ENCODE measurements at regions of chr19 and their contacts with region 1.

Region 1: GRCh38 chr19:16382775-16383543 is 58.3 kb downstream of the KLF2 start:
- DNase-seq: peak; percentile 75 to 82 (median 78)
- ATAC-seq: peak; percentile 94
- H3K4me3 ChIP-seq: no peak overlapping the region
- H3K27ac ChIP-seq: no peak overlapping the region
- H3K4me1 ChIP-seq: peaks cover 0 to 11% of the 10 kb centered on the region in 2 experiments; a peak in 1 of 5 replicates
- H3K27me3 ChIP-seq: no peaks in the 10 kb centered on the region
- CTCF ChIP-seq: peak; percentile 78 to 85 (median 79)
- EP300 ChIP-seq: no peak
- POLR2A ChIP-seq: no peak
- RAD21 ChIP-seq: peak; percentile 91 to 97

Region 2: DNA sequence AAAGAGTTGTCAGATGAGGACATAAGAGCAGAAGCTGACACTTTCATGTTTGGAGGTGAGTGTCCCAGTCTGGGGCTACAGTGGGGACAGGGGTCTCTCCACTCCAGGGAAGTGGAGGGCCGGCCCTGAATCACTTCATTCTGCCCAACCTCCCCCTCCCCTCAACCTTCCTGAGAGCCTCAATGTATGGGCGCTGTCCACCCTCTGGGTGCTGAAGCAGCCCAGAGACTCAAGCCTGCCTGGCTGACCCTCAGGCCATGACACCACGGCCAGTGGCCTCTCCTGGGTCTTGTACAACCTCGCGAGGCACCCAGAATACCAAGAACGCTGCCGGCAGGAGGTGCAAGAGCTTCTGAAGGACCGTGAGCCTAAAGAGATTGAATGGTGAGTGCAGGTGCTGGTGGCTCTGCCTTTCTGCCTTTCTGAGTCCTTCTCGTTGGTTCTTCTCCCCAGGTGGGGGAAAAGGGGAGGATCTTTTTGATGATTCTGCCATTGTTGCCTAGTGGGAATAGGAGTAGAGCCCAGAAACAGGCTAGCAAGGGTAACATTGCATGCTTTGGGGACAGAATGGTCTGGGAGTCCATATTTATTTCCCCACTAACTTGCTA is 759.1 kb before region 1 on chr19:
- CTCF ChIA-PET with region 1: no interaction called
- POLR2A ChIA-PET with region 1: no interaction called
- in situ Hi-C with region 1: loop called (anchors 25 kb)
- intact Hi-C with region 1: no loop called
- DNase-seq: peak; percentile 31 to 59 (median 48)
- ATAC-seq: peak; percentile 78
- H3K4me3 ChIP-seq: no peak overlapping the region
- H3K27ac ChIP-seq: no peak overlapping the region
- H3K4me1 ChIP-seq: no peaks in the 10 kb centered on the region
- H3K27me3 ChIP-seq: no peaks in the 10 kb centered on the region; a peak in 1 of 5 replicates
- CTCF ChIP-seq: no peak
- EP300 ChIP-seq: no peak
- POLR2A ChIP-seq: no peak
- RAD21 ChIP-seq: no peak

Region 3: DNA sequence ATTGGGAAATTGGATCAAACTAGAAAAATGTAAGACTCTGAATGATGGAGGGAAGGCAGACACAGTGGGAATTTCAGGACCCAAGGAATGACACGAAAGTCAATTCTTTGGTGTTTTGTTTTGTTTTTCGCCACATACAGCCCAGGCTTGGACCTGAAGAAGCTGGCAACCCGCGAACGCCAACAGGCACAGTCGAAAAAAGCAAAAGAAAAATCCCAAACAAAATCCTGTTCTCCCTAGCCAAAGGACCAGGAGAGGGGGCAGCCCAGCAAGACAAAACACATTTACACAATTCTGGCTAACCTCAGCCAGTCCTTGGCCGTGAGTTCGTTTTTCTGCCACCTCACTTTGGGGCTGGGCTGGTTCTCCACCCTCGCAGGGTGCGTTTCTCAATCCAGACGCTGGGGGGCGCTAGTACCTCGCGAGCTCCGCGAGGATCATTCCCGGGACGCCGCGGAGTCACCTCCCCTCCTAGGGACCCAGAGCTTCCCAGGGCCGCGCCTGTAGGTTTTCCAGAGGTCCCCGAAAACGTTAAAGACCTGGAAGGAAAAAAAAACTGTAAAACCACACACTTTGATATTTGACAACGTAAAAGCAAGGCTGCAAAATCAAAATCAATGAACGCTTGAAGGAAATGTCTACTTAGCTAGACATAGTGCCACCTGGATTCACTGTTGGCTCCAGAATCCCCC is 341.5 kb before region 1 on chr19:
- CTCF ChIA-PET with region 1: no interaction called
- POLR2A ChIA-PET with region 1: no interaction called
- in situ Hi-C with region 1: loop called (anchors 10 kb)
- intact Hi-C with region 1: no loop called
- DNase-seq: peak; percentile 77 to 94 (median 90)
- ATAC-seq: peak; percentile 93
- H3K4me3 ChIP-seq: no peak overlapping the region
- H3K27ac ChIP-seq: no peak overlapping the region
- H3K4me1 ChIP-seq: peaks cover 0 to 9% of the 10 kb centered on the region in 2 experiments; a peak in 3 of 5 replicates
- H3K27me3 ChIP-seq: peaks cover 1 to 29% of the 10 kb centered on the region in 2 experiments; a peak in 3 of 5 replicates
- CTCF ChIP-seq: peak; percentile 90 to 95 (median 93)
- EP300 ChIP-seq: no peak
- POLR2A ChIP-seq: no peak
- RAD21 ChIP-seq: peak; percentile 88 to 94

Region 4: DNA sequence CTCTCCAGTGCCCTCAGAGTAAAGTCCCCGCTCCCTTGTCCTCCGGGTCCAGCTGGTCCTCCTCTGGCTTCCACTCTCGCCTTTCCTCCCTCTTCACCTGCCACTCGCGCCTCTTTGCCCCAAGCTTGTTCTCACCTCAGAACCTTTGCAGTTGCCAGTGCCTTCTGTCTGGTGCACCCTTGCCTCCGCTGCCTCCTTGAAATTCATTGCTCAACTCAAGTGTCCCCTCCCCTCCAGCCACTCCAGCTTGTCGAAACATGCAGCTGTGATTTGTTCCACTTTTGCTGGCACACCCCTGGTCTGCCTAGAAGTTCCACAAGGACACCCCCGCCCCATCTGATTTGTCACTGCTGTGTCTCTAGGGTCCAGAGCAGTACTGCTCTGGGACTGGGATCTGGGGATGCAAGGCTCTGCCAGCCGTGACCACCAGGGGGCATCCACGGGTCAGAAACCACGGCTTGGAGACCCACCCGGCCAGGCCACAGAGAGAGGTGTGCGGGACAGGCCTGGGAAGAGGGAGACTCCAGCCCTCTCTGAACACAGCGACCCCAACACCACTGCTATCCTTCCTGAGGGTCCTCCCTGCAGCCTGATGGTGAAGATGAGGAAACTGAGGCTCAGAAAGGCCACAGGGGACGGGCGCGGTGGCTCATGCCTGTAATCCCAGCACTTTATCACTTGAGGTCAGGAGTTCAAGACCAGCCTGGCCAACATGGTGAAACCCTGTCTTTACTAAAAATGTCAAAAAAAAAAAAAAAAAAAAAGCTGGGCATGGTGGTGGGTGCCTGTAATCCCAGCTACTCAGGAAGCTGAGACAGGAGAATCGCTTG is 135.4 kb before region 1 on chr19:
- CTCF ChIA-PET with region 1: interaction called, 60 read pairs
- POLR2A ChIA-PET with region 1: no interaction called
- in situ Hi-C with region 1: loop called (anchors 5 kb)
- intact Hi-C with region 1: loop called (anchors 1 kb)
- DNase-seq: peak; percentile 86 to 90 (median 89)
- ATAC-seq: peak; percentile 100
- H3K4me3 ChIP-seq: no peak overlapping the region
- H3K27ac ChIP-seq: no peak overlapping the region
- H3K4me1 ChIP-seq: peaks cover 0 to 9% of the 10 kb centered on the region in 2 experiments; a peak in 2 of 5 replicates
- H3K27me3 ChIP-seq: no peaks in the 10 kb centered on the region
- CTCF ChIP-seq: peak; percentile 94 to 96 (median 94)
- EP300 ChIP-seq: 0 out of 2 replicates have a peak, but pooled peaks have one; percentile 26
- POLR2A ChIP-seq: no peak
- RAD21 ChIP-seq: peak; percentile 97 to 99

Region 5: DNA sequence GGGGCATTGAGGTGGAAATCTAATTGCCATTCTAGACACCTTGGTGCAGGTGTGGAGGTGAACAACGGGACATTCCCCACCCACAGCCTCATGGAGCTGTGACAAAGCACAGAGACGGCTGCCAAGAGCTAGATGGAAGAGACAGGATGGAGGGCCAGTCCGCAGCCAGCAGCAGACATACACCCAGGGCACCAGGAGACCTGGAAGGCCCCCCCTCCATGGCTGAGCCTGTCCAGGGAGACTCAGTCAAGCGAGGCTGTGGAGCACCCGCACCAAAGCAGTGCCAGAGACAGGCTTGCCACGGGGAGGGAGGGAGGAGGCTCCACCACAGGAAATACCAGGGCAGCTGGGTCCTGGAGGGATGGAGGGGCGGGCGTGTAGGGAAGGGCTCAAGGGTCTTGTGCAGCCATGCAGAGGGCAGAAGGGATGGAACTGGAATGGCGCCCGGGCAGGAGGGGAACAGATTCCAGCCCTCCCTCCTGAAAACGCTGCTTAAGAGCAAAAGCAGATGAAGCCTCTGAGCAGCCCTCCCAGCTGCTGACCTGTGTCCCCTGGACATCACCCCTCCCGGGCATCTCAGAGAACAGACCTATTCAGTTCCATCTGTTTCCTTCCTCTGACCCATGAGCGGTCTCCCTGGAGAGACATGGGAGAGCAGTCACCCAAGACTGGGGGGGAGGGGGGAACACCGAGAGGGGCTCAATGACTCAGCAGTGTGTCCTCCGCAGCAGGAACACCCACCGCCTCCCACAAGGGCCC is 74.4 kb after region 1 on chr19:
- CTCF ChIA-PET with region 1: no interaction called
- POLR2A ChIA-PET with region 1: no interaction called
- in situ Hi-C with region 1: no loop called
- intact Hi-C with region 1: no loop called
- DNase-seq: peak in 2 of 4 experiments; percentile 47 to 57
- ATAC-seq: peak; percentile 57
- H3K4me3 ChIP-seq: no peak overlapping the region
- H3K27ac ChIP-seq: no peak overlapping the region
- H3K4me1 ChIP-seq: peaks cover 0 to 15% of the 10 kb centered on the region in 2 experiments; a peak in 3 of 5 replicates
- H3K27me3 ChIP-seq: no peaks in the 10 kb centered on the region
- CTCF ChIP-seq: no peak
- EP300 ChIP-seq: no peak
- POLR2A ChIP-seq: no peak
- RAD21 ChIP-seq: no peak

Measured in K562 (cell line).